ENCODE measurements at regions of chr17 and their contacts with region 1.

Region 1: GRCh38 chr17:49180303-49180702 is 30.1 kb downstream of the GNGT2 start:
- DNase-seq: peak; percentile 71
- ATAC-seq: peak; percentile 61
- H3K4me3 Mint-ChIP-seq: no peak overlapping the region
- H3K27ac Mint-ChIP-seq: no peak overlapping the region
- H3K4me1 Mint-ChIP-seq: peaks cover 15% of the 10 kb centered on the region
- H3K27me3 Mint-ChIP-seq: peaks cover 9% of the 10 kb centered on the region

Region 2: GRCh38 chr17:49063652-49064051 is 116.7 kb before region 1 on chr17:
- CTCF ChIA-PET with region 1: no interaction called
- POLR2A ChIA-PET with region 1: no interaction called
- DNase-seq: no peak
- ATAC-seq: no peak
- H3K4me3 Mint-ChIP-seq: no peak overlapping the region
- H3K27ac Mint-ChIP-seq: no peak overlapping the region
- H3K4me1 Mint-ChIP-seq: no peaks in the 10 kb centered on the region
- H3K27me3 Mint-ChIP-seq: peaks cover 4% of the 10 kb centered on the region

Region 3: DNA sequence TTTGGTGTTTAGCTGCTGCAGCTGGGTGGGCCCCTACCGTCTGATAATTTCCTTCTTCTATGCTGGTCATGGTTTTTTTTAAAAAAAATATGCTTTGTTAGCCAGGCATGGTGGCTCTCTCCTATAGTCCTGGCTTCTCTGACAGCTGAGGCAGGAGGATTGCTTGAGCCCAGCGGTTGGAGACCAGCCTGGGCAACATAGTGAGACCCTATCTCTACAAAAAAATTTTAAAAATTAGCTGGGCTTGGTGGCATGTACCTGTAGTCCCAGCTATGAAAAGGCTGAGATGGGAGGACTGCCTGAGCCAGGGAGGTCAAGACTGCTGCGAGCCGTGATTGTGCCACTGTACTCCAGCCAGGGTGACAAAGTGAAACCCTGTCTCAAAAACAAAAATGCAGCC is 28.3 kb before region 1 on chr17:
- CTCF ChIA-PET with region 1: no interaction called
- POLR2A ChIA-PET with region 1: no interaction called
- DNase-seq: no peak
- ATAC-seq: no peak
- H3K4me3 Mint-ChIP-seq: no peak overlapping the region
- H3K27ac Mint-ChIP-seq: no peak overlapping the region
- H3K4me1 Mint-ChIP-seq: no peaks in the 10 kb centered on the region
- H3K27me3 Mint-ChIP-seq: peaks cover 5% of the 10 kb centered on the region

Region 4: GRCh38 chr17:49170216-49170615 is 10.1 kb before region 1 on chr17:
- CTCF ChIA-PET with region 1: interaction called, 13 read pairs
- POLR2A ChIA-PET with region 1: no interaction called
- DNase-seq: no peak
- ATAC-seq: no peak
- H3K4me3 Mint-ChIP-seq: no peak overlapping the region
- H3K27ac Mint-ChIP-seq: no peak overlapping the region
- H3K4me1 Mint-ChIP-seq: no peaks in the 10 kb centered on the region
- H3K27me3 Mint-ChIP-seq: peaks cover 52% of the 10 kb centered on the region

Region 5: DNA sequence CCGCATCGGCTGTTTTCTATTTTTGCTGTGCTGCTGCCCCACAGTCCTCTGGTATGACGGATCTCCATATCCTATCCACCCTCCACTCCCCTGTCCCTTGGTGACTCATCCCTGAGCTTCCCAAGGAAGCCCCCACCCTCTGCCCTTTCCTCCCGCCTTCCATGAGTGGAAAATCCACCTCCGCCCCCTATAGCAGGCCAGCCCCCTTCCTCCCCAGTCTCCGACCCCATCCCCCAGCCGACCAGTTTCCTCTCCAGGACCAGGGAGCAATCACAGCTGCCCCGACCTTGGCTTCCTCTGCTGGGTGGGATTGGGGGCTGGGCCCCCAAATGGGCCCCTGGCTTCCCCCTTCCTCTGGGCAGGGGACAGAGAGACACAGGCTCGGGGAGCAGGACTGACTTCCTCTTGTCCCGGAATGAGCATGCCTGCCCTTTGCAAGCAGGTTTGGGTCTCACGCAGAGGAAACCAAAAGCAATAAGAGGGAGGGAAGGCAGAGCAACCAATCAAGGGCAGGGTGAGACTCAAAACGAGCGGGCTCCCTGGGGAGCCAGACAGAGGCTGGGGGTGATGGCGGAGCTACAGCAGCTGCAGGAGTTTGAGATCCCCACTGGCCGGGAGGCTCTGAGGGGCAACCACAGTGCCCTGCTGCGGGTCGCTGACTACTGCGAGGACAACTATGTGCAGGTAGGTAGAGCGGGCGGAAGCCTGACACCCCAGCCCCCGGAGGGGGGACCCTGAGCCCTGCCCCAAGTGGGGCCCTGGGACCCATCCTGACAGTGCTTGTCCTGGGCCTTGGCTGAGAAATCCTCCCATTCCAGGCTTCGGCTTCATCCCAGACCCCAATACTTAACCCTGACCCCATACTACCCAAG is 30.1 kb after region 1 on chr17 and contains the starts of genes ABI3 and GNGT2:
- CTCF ChIA-PET with region 1: interaction called, 20 read pairs
- POLR2A ChIA-PET with region 1: no interaction called
- DNase-seq: peak; percentile 84
- ATAC-seq: peak; percentile 83
- H3K4me3 Mint-ChIP-seq: peak within 1 kb of the TSS; percentile 96
- H3K27ac Mint-ChIP-seq: peak within 1 kb of the TSS; percentile 89
- H3K4me1 Mint-ChIP-seq: peaks cover 62% of the 10 kb centered on the region
- H3K27me3 Mint-ChIP-seq: no peaks in the 10 kb centered on the region
- total RNA-seq, gene ABI3: 110 to 117 TPM
- total RNA-seq, gene GNGT2: 40.0 to 45.4 TPM

Region 6: DNA sequence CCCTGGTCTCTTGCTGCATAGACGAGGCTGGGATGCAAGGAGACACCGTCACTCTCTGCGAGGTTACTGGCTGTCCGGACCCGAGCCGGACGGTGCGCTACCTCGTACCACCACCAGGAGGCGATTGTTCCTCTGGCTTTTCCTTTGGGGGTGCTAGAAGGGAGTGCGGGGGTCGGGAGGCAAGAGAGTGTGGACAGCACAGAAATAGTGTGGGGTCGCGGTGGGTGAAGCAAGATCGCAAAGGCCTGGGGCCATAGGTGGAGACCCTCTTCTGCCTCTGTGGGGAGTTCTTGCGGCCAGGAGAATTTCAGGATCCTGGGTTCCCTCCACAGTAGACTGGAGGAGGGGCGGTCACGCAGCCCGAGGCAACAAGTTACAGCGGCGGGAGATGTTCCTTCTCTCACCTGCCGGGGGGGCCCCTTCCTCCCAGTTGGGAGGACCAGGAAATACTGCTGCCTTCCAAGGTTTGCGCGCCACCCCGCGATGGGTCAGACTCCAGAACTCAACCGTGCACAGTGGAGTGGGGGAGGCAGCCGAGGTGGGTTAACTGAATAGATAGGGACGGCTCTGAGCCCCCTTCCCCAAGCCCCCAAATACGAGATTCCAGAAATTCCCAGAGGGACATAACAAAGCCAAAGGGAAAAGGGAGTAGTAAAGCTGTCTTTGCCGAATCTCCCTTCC is 43.4 kb after region 1 on chr17:
- CTCF ChIA-PET with region 1: interaction called, 91 read pairs
- POLR2A ChIA-PET with region 1: interaction called, 5 read pairs
- DNase-seq: peak; percentile 78
- ATAC-seq: no peak
- H3K4me3 Mint-ChIP-seq: peak overlapping the region; percentile 53
- H3K27ac Mint-ChIP-seq: peak overlapping the region; percentile 83
- H3K4me1 Mint-ChIP-seq: peaks cover 73% of the 10 kb centered on the region
- H3K27me3 Mint-ChIP-seq: no peaks in the 10 kb centered on the region

Region 7: GRCh38 chr17:49290690-49291359 is 110.5 kb after region 1 on chr17:
- CTCF ChIA-PET with region 1: interaction called, 19 read pairs
- POLR2A ChIA-PET with region 1: no interaction called
- DNase-seq: peak; percentile 32
- ATAC-seq: no peak
- H3K4me3 Mint-ChIP-seq: no peak overlapping the region
- H3K27ac Mint-ChIP-seq: no peak overlapping the region
- H3K4me1 Mint-ChIP-seq: peaks cover 3% of the 10 kb centered on the region
- H3K27me3 Mint-ChIP-seq: no peaks in the 10 kb centered on the region